Ovary (tissue), 10 donors: ENCODE measurements at regions of chr12 and their contacts with region 1.

Region 1: GRCh38 chr12:1117970-1118563 is 127.0 kb downstream of the ERC1 start:
- DNase-seq: peak; percentile 52 to 78 (median 74)
- H3K4me3 ChIP-seq: no peak overlapping the region
- H3K27ac ChIP-seq: no peak overlapping the region
- H3K4me1 ChIP-seq: no peaks in the 10 kb centered on the region
- H3K27me3 ChIP-seq: no peaks in the 10 kb centered on the region
- CTCF ChIP-seq: peak; percentile 81 to 89 (median 83)
- EP300 ChIP-seq: no peak
- POLR2A ChIP-seq: no peak

Region 2: GRCh38 chr12:1583421-1584078 is 465.5 kb after region 1 on chr12:
- intact Hi-C with region 1: loop called (anchors 5 to 10 kb)
- DNase-seq: peak; percentile 59 to 81 (median 66)
- H3K4me3 ChIP-seq: no peak overlapping the region
- H3K27ac ChIP-seq: no peak overlapping the region
- H3K4me1 ChIP-seq: no peaks in the 10 kb centered on the region
- H3K27me3 ChIP-seq: no peaks in the 10 kb centered on the region
- CTCF ChIP-seq: peak; percentile 77 to 91 (median 81)
- EP300 ChIP-seq: no peak
- POLR2A ChIP-seq: no peak